ENCODE measurements at regions of chr12 and their contacts with region 1.

Region 1: GRCh38 chr12:38906482-38907170 is 1.2 kb upstream of the CPNE8 start:
- DNase-seq: peak; percentile 88 to 94
- H3K4me3 ChIP-seq: peak overlapping the region; percentile 94
- H3K4me3 Mint-ChIP-seq: peak overlapping the region; percentile 98
- H3K27ac Mint-ChIP-seq: peak overlapping the region; percentile 93
- H3K4me1 ChIP-seq: 0 out of 2 replicates have a peak, but pooled peaks cover 4% of the 10 kb centered on the region
- H3K4me1 Mint-ChIP-seq: peaks cover 13% of the 10 kb centered on the region
- H3K27me3 ChIP-seq: no peaks in the 10 kb centered on the region
- H3K27me3 Mint-ChIP-seq: no peaks in the 10 kb centered on the region
- CTCF ChIP-seq: peak; percentile 82 to 98

Region 2: GRCh38 chr12:38664661-38665269 is 241.9 kb before region 1 on chr12:
- CTCF ChIA-PET with region 1: interaction called, 18 read pairs
- POLR2A ChIA-PET with region 1: no interaction called
- intact Hi-C with region 1: loop called (anchors 1 kb)
- DNase-seq: peak in 1 of 2 experiments; percentile 45
- H3K4me3 ChIP-seq: no peak overlapping the region
- H3K4me3 Mint-ChIP-seq: no peak overlapping the region
- H3K27ac Mint-ChIP-seq: no peak overlapping the region
- H3K4me1 ChIP-seq: no peaks in the 10 kb centered on the region
- H3K4me1 Mint-ChIP-seq: peaks cover 6% of the 10 kb centered on the region
- H3K27me3 ChIP-seq: no peaks in the 10 kb centered on the region
- H3K27me3 Mint-ChIP-seq: no peaks in the 10 kb centered on the region
- CTCF ChIP-seq: peak; percentile 48 to 82

Region 3: DNA sequence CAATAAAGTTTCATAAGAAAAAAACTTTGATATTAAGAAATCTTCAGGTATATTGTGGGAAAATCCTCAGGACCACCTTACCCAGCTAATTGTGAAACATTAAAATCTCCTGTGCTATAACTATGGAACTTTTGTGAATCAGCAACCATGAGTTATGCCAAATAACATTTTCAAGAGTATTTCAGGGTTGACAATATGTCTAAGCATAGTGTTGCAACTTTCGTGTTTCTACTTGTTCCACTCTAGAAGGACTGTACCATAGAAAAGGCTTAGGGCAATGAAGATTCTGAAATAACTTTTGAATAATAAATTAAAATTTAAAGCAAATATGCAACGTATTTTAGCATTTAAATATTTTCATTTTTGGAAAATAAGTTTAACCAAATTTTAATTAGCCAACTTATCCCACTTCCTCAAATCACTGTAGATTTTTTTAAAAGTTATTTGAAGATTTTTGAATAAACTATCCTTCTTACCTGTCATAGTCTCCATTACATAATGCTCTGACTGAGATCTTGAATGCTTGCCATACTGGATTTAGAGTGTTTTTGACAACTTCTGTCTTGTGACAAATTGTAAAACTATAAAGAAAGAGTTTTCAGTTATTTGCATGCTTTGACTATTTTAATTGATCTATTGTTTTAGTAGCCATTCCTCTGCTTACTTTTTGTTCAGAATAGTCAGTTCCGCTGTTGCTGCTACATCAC is 144.8 kb before region 1 on chr12:
- CTCF ChIA-PET with region 1: no interaction called
- POLR2A ChIA-PET with region 1: no interaction called
- intact Hi-C with region 1: loop called (anchors 10 kb)
- DNase-seq: no peak
- H3K4me3 ChIP-seq: no peak overlapping the region
- H3K4me3 Mint-ChIP-seq: no peak overlapping the region
- H3K27ac Mint-ChIP-seq: no peak overlapping the region
- H3K4me1 ChIP-seq: no peaks in the 10 kb centered on the region
- H3K4me1 Mint-ChIP-seq: no peaks in the 10 kb centered on the region
- H3K27me3 ChIP-seq: no peaks in the 10 kb centered on the region
- H3K27me3 Mint-ChIP-seq: no peaks in the 10 kb centered on the region
- CTCF ChIP-seq: no peak

Region 4: GRCh38 chr12:38823739-38824138 is 82.9 kb before region 1 on chr12:
- CTCF ChIA-PET with region 1: no interaction called
- POLR2A ChIA-PET with region 1: no interaction called
- intact Hi-C with region 1: loop called (anchors 5 kb)
- DNase-seq: no peak
- H3K4me3 ChIP-seq: no peak overlapping the region
- H3K4me3 Mint-ChIP-seq: no peak overlapping the region
- H3K27ac Mint-ChIP-seq: no peak overlapping the region
- H3K4me1 ChIP-seq: no peaks in the 10 kb centered on the region
- H3K4me1 Mint-ChIP-seq: no peaks in the 10 kb centered on the region
- H3K27me3 ChIP-seq: no peaks in the 10 kb centered on the region
- H3K27me3 Mint-ChIP-seq: no peaks in the 10 kb centered on the region
- CTCF ChIP-seq: no peak

Region 5: GRCh38 chr12:38921025-38921677 is 14.5 kb after region 1 on chr12:
- CTCF ChIA-PET with region 1: interaction called, 36 read pairs
- POLR2A ChIA-PET with region 1: no interaction called
- intact Hi-C with region 1: no loop called
- DNase-seq: peak; percentile 70
- H3K4me3 ChIP-seq: no peak overlapping the region
- H3K4me3 Mint-ChIP-seq: no peak overlapping the region
- H3K27ac Mint-ChIP-seq: no peak overlapping the region
- H3K4me1 ChIP-seq: no peaks in the 10 kb centered on the region
- H3K4me1 Mint-ChIP-seq: no peaks in the 10 kb centered on the region
- H3K27me3 ChIP-seq: no peaks in the 10 kb centered on the region
- H3K27me3 Mint-ChIP-seq: peaks cover 2% of the 10 kb centered on the region
- CTCF ChIP-seq: peak; percentile 72 to 89

Region 6: DNA sequence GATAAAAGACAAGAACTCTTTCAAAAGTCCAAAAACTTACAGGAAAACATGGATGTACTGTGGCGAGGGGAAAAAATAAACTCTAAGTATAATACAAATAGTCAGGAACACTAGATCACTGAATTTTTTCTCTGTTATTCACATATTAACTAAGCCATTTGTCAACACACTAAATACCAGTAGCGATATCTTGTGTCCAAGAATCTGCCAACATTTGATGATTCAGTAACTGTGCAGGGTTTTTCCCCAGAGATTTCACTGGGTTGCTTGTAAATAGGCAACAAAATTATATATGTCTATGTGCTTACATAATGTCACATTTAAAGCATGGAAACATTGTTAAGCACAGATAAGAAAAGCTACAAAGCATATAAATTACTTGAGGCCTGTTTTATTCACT is 330.4 kb after region 1 on chr12:
- CTCF ChIA-PET with region 1: interaction called, 3 read pairs
- POLR2A ChIA-PET with region 1: no interaction called
- intact Hi-C with region 1: loop called (anchors 5 kb)
- DNase-seq: peak in 1 of 2 experiments; percentile 49
- H3K4me3 ChIP-seq: no peak overlapping the region
- H3K4me3 Mint-ChIP-seq: no peak overlapping the region
- H3K27ac Mint-ChIP-seq: no peak overlapping the region
- H3K4me1 ChIP-seq: peaks cover 52% of the 10 kb centered on the region
- H3K4me1 Mint-ChIP-seq: peaks cover 29% of the 10 kb centered on the region
- H3K27me3 ChIP-seq: no peaks in the 10 kb centered on the region
- H3K27me3 Mint-ChIP-seq: no peaks in the 10 kb centered on the region
- CTCF ChIP-seq: no peak

Measured in Caco-2 (cell line).